A549 (cell line): ENCODE measurements at regions of chr2 and their contacts with region 1.

Region 1: DNA sequence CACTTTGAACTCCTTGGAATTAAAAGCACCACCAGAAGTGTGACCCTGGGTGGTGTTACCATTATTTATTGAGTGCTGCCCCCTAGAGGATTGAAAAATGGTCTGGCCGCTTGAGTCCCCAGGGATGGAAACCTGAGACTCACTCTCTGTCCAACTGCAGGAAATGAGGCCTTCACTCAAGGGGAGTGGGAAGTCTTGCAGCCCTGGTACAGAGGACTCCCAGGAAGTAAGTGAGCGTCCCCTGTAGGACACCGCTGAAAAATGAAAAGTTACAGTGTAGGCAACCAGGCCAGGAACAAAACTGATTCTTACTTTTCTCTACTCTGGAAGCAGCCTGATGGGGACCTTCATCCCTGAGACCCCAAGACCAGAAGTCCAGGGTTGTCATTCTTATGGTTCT is 2.2 kb upstream of the NRP2 start:
- DNase-seq: peak; percentile 59 to 96
- ATAC-seq: peak; percentile 56 to 81
- H3K4me3 ChIP-seq: no peak overlapping the region
- H3K27ac ChIP-seq: peak overlapping the region; percentile 25 to 98; a peak in 4 of 6 replicates
- H3K4me1 ChIP-seq: peaks cover 22% of the 10 kb centered on the region
- CTCF ChIP-seq: peak; percentile 86
- EP300 ChIP-seq: no peak
- POLR2A ChIP-seq: no peak
- RAD21 ChIP-seq: peak; percentile 72 to 77

Region 2: GRCh38 chr2:204325468-204325867 is 1354.6 kb before region 1 on chr2:
- CTCF ChIA-PET with region 1: interaction called, 15 read pairs
- POLR2A ChIA-PET with region 1: no interaction called
- DNase-seq: peak; percentile 49 to 82
- ATAC-seq: peak; percentile 85 to 90
- H3K4me3 ChIP-seq: no peak overlapping the region
- H3K27ac ChIP-seq: 0 out of 6 replicates have a peak overlapping the region, but pooled peaks of 1 of the 2 experiments have one; percentile 38
- H3K4me1 ChIP-seq: peaks cover 16% of the 10 kb centered on the region; the same call in 2 of the 3 replicates
- CTCF ChIP-seq: peak; percentile 94
- EP300 ChIP-seq: no peak
- POLR2A ChIP-seq: no peak
- RAD21 ChIP-seq: peak; percentile 94 to 96

Region 3: DNA sequence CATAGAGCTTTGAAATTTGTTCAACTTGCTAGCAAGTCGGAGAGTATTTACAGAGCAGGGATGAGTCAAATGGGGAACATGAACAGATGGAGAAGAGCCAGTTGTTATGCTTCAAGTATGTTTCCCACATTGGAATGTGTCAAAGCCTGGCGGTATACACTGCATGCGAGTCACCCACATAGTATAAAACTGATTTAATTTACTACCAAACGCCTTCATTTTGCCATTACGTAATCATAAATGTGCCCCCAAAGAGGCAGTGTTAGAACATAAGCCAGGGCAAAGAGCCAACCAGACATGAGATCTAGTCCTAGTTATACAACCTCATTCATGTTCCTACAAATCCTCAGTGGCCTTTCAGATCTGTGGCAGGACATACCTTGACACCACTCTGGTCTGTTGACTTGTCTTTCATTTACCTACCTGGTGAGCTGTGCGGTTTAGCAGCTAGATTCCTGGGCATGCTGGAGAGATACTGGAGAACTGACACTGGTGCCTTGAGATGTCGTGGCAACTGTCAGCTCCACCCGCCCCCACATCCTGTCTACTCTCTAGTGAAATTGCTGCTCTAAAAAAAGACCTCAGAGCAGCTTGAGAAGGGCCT is 19.4 kb before region 1 on chr2:
- CTCF ChIA-PET with region 1: interaction called, 14 read pairs
- POLR2A ChIA-PET with region 1: no interaction called
- DNase-seq: peak in 1 of 2 experiments; percentile 27
- ATAC-seq: peak; percentile 10 to 62; a peak in 3 of 6 replicates
- H3K4me3 ChIP-seq: no peak overlapping the region
- H3K27ac ChIP-seq: no peak overlapping the region
- H3K4me1 ChIP-seq: peaks cover 10% of the 10 kb centered on the region
- CTCF ChIP-seq: no peak
- EP300 ChIP-seq: no peak
- POLR2A ChIP-seq: no peak
- RAD21 ChIP-seq: no peak

Region 4: DNA sequence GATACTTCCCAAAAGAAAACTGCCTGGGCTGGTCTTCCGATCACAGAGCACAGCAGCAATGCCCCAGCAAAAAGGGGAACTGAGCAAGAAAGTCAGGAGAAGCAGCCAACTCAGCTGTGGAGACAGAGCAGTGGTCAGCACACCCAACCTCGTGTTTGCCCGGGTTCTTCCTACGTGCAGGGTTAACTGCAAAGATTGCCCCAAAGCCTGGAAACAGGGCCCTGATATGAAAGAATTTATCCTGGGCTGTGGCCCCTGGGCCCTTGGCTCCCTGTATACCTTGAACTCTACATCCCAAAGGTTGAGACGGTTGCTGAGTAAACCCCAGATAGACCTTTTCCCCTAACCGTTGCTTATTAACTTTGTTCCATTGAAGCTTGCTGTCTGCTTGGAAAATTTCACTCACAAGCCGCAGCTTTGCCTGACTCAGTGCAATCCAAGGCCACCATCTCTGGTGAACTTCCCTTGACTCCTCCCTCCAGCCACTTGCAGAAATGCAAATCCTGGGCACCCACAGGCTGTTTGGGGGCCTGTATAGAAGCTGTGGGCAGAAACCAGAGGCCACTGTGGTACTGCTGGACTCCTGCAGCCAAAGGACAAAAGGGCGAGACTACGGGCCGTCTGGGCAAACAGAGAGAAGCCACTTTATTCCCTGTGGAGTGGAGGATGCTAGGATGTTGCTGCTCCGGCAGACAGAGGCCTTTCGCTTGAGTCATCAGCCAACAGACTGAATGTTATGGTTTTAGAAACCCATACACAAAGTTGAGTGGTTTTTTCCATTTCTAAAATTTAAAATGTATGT is 20.5 kb after region 1 on chr2:
- CTCF ChIA-PET with region 1: interaction called, 33 read pairs
- POLR2A ChIA-PET with region 1: interaction called, 26 read pairs
- DNase-seq: peak; percentile 41 to 93
- ATAC-seq: peak; percentile 83 to 91
- H3K4me3 ChIP-seq: peak overlapping the region; percentile 24; the same call in 2 of the 3 replicates
- H3K27ac ChIP-seq: peak overlapping the region; percentile 93 to 95
- H3K4me1 ChIP-seq: peaks cover 100% of the 10 kb centered on the region
- CTCF ChIP-seq: no peak
- EP300 ChIP-seq: peak; percentile 62 to 76; a peak in 3 of 5 replicates
- POLR2A ChIP-seq: no peak
- RAD21 ChIP-seq: peak in 1 of 2 experiments; percentile 46; a peak in 3 of 5 replicates

Region 5: GRCh38 chr2:205748639-205749477 is 68.8 kb after region 1 on chr2:
- CTCF ChIA-PET with region 1: no interaction called
- POLR2A ChIA-PET with region 1: interaction called, 13 read pairs
- DNase-seq: peak; percentile 83 to 85
- ATAC-seq: peak; percentile 69 to 81
- H3K4me3 ChIP-seq: no peak overlapping the region
- H3K27ac ChIP-seq: peak overlapping the region; percentile 87 to 94
- H3K4me1 ChIP-seq: peaks cover 88% of the 10 kb centered on the region
- CTCF ChIP-seq: no peak
- EP300 ChIP-seq: peak; percentile 49 to 80; a peak in 3 of 5 replicates
- POLR2A ChIP-seq: no peak
- RAD21 ChIP-seq: peak in 1 of 2 experiments; percentile 20; a peak in 1 of 5 replicates